Activated CD4-positive, alpha-beta T cell treated with anti-CD3 and anti-CD28 coated beads for 36 hours (primary cell): ENCODE measurements at regions of chr11 and their contacts with region 1.

Region 1: DNA sequence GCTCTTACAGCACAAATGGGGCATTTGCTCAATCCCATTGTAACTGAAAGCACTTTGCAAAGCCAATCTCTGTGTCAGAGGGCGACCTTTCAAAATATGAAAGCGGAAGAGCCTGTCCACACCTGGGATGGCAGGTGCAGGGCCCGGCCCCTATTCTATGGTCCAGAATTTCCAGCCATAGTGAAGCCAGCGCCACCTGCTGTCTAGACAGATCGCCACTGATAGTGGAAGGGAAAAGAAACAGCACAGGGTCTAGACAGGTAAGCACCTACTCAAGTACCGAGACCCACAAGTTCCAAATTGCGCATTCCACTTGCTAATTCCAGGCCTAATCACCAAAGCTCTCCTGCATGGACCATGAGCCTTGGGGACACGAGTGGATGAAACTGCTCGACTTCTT is 141.4 kb downstream of the NTM start:
- DNase-seq: peak; percentile 29
- ATAC-seq: no peak
- H3K4me3 Mint-ChIP-seq: no peak overlapping the region
- H3K27ac Mint-ChIP-seq: no peak overlapping the region
- H3K4me1 Mint-ChIP-seq: no peaks in the 10 kb centered on the region
- H3K27me3 Mint-ChIP-seq: no peaks in the 10 kb centered on the region

Region 2: DNA sequence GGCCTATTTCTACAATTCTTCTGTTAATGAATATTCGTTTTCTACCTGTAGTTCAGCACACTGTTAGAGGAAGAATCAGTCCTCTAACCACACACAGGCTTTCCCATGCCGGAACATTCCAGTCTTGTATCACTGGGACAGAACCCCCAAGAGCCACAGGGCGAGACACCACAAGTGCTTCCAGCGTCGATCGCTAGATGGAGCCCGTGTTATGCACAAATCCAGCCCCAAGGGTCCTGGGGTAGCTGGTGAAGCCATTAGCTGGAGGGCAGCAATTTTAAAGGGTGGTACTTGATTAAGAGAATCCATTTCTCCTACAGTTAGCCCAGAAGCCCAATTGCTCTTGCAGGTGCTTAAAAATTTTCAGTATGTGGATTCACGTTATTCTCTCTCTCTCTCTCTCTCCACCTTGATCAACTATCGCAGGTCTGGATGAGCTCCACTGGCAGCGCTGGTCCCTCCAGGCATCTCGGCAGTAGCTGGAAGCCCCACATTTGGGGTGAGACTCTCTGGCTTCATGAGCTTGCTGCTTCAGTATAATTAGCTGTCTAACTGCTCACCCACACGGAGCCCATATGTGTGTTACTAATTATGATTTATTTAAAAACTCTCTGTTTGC is 447.3 kb before region 1 on chr11:
- CTCF ChIA-PET with region 1: no interaction called
- POLR2A ChIA-PET with region 1: no interaction called
- intact Hi-C with region 1: loop called (anchors 2 to 10 kb)
- DNase-seq: peak; percentile 57
- ATAC-seq: no peak
- H3K4me3 Mint-ChIP-seq: no peak overlapping the region
- H3K27ac Mint-ChIP-seq: no peak overlapping the region
- H3K4me1 Mint-ChIP-seq: no peaks in the 10 kb centered on the region
- H3K27me3 Mint-ChIP-seq: peaks cover 18% of the 10 kb centered on the region